HEK293T (cell line): ENCODE measurements at regions of chr1 and their contacts with region 1.

Region 1: DNA sequence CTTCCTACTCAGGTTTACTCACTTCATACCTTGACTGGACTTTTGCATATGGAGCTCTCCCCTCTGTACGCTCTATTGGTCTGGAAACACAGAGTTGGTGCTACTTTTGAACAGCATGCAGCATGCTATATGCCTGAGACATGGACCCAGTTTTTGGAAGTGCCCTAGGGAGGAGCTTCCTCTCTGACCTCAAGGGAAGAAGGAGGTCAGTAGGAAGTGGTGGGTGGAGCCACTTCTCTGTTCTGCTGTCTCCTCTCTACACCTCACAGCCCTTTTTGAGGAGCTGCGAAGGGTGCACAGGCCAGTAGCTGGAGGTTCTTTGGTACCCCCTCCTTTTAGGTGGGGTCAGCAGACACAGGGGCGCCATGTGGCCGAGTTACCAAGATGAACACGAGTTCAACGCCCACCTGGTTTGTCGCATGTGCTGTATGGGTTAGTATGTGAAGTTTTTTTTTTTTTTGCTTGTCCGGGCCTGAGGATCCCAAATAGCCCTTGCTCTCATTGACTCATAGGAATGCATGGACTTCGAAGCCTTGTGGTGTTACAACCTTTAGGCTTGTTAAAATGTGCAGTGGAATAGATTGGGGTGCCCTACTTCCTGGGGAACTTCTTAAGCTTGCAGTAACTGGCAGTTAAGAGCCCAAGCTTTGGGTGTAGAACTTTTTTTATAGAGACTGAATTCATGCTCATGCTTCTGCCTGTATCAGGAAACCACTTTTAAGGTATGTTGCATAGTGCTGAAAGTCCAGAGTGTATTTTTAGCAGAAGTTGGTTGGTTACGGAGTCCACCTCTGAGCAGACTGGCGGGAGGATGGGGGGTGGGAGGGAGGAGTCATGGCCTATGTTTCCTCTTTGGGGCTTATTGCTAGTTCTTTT is 10.7 kb downstream of the MACF1 start:
- DNase-seq: no peak

Region 2: GRCh38 chr1:39034114-39034654 is 181.1 kb before region 1 on chr1:
- CTCF ChIA-PET with region 1: no interaction called
- POLR2A ChIA-PET with region 1: no interaction called
- DNase-seq: no peak

Region 3: DNA sequence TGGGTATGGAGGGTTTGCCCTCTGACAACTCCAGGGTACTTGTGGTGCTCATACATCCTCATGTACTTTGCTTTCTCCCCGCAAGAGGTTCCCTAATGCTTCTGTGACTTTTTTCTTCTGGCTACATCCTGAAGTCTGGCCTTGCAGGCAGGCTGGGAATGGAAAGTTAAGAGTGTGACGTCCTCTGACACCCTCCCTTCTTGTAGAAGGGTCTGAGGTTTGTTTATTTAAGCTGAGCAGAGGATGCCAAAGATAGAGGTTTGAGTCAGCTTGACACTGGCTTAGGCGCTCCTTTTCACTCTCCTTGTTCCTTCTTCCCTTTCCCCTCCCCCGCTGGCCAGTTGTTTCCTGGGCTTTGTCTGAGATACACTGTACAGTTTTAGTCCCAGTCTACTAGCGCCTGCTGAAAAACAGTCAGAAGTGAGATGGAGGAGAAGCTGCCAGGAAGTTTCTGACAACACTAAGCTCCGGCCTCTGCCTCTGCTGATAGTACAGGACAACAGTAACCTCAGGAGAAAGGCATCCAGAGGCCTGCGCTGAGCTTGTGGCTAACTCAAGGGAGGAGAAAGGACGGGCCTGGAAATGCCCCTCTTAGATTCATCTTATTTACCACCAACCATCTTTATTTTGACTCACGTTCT is 10.7 kb before region 1 on chr1 and contains the start of gene MACF1:
- CTCF ChIA-PET with region 1: interaction called, 8 read pairs
- POLR2A ChIA-PET with region 1: interaction called, 16 read pairs
- DNase-seq: no peak